ENCODE measurements at regions of chr20 and their contacts with region 1.

Region 1: DNA sequence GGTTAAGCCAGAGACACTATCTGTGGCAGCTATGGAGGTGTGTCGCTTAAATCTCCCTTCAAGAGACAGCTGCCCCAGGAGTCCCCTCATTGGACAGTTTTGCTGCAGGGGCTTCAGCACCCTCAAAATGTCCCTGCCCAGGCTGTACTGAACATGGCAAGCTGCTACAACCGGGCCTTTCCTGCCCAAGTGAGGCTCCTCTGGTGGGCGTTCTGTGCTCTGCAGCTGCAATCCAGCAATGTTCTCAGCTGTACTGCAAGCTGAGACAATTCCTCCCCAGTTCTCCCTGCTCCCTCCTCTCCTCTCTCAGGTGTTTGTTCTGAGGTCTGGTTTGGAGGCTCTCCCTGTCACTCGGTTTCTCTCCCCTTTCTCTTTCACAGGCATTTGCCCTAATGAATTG is 190.8 kb upstream of the LAMP5 start:
- DNase-seq: no peak
- H3K4me3 ChIP-seq: no peak overlapping the region
- H3K27ac ChIP-seq: no peak overlapping the region
- H3K4me1 ChIP-seq: peaks cover 0 to 6% (median 0%) of the 10 kb centered on the region in 4 donors
- H3K27me3 ChIP-seq: no peaks in the 10 kb centered on the region
- CTCF ChIP-seq: no peak

Region 2: DNA sequence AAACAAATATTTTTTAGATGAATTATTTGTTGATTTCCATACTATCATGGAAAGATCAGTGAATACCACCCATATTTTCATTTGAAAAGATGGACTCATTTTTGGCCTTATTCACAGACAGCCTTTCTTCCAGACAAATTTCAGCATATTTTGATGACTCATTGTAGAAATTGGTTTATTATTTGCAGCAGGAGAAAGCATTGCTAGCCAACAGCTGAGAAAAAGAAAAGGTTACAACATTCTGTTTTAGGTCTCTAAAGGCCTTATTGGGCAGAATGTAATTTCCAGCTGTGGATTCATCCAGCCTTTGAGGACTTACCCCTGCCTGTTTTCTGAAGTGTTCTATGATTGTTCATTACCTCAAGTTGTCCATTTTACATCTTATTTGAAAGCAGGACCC is 52.8 kb before region 1 on chr20:
- intact Hi-C with region 1: loop called (anchors 10 kb)
- DNase-seq: no peak
- H3K4me3 ChIP-seq: no peak overlapping the region
- H3K27ac ChIP-seq: no peak overlapping the region
- H3K4me1 ChIP-seq: peaks cover 0 to 20% (median 0%) of the 10 kb centered on the region in 4 donors
- H3K27me3 ChIP-seq: no peaks in the 10 kb centered on the region
- CTCF ChIP-seq: no peak

Region 3: DNA sequence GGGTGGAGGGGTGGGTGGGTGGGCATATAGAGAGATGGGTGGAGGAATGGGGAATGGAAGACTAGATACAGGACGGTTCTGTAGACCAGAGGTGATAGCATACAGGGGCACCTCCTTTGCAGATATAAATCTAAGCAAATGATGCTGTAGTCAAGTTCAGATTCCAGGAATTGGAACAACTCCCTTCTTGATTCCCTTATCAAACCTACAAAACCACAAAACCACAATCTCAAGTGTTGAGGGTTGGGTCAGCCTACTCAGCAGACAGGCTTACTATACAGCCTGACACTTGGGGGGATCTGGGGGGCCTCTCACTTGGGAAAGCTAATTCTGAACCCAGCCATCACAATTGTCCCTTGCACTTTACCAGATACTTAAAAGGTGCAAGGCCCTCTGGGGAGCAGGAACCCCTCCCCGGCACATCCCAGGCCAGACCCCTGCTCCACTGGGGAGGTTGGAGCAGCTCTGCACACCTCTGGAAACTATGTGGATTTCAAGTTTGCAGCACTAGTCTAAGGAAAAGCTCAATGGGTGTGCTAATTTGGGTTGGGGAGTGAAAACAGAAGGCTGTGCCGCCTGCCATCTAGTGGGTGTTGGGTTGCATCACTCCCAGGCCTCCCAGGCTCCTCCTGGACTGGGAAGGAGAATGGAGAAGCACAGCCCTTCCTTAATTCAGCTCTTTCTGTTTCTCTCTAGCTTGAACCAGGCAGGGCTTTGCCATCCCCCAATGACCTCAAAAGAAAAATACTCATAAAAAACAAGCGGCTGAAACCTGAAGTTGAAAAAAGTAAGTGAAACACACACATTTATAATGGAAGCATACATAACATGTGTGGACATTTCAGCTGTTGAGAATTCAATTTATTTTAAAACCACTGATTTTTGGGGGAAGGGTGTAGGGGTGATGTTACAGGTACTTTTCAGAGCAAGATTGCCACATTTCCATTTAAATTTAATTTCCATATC is 69.6 kb after region 1 on chr20:
- intact Hi-C with region 1: no loop called
- DNase-seq: peak; percentile 79 to 81
- H3K4me3 ChIP-seq: no peak overlapping the region
- H3K27ac ChIP-seq: no peak overlapping the region
- H3K4me1 ChIP-seq: peaks cover 0 to 49% (median 5%) of the 10 kb centered on the region in 4 donors
- H3K27me3 ChIP-seq: no peaks in the 10 kb centered on the region
- CTCF ChIP-seq: peak; percentile 78 to 89

Measured in tibial artery (tissue), 4 donors.